Caco-2 (cell line): ENCODE measurements at regions of chr11 and their contacts with region 1.

Region 1: DNA sequence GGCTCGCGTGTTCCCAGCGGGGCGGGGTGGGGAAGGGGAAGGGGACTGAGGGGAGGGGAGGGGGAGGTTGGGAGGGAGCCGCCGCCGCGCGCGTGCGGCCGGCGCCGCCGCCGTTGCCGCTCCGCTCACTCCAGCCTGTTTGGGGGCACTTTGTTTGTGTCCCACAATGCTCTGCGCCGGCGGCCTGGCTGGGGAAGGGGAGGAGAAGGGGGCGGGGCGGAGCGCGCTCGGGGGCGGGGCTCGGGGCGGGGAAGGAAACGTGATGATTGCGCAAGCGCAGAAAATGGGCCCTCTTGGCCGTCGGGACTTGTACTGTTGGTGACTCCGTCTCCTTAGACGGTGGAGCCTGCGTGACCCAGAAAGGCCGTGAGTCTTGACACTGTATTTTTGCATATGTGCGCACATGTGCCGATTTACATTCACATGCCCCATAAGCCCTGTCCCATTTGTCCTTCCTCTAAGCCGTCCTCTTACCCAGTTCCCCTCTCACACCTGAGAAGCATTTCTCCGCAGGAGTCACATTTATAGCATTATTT is at the start of gene ZBTB44:
- DNase-seq: peak; percentile 95 to 97
- H3K4me3 ChIP-seq: peak within 1 kb of the TSS; percentile 62
- H3K4me3 Mint-ChIP-seq: peak within 1 kb of the TSS; percentile 89
- H3K27ac Mint-ChIP-seq: peak within 1 kb of the TSS; percentile 87
- H3K4me1 ChIP-seq: peaks cover 30% of the 10 kb centered on the region
- H3K4me1 Mint-ChIP-seq: peaks cover 50% of the 10 kb centered on the region
- H3K27me3 ChIP-seq: no peaks in the 10 kb centered on the region
- H3K27me3 Mint-ChIP-seq: no peaks in the 10 kb centered on the region
- CTCF ChIP-seq: no peak
- total RNA-seq, gene ZBTB44: 49.5 and 53.6 TPM in 2 replicates

Region 2: DNA sequence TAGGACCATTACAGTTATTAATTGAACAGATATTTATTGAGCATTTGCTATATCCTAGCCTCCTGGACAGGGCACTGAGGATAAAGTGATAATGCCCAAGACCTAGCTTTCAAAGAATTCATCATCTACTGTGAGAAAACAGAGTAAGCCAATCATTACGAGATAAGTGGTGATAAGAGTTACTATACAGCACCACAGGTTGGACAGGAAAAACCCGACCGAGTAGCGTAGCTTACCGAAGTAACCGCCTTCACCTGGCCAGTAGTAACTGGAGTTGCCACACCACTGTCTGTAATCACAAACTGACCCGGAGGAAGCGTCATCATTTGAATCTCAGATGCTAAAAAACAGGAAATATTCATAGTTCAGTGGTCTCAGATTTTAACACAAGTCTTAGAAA is 409.4 kb before region 1 on chr11:
- CTCF ChIA-PET with region 1: no interaction called
- POLR2A ChIA-PET with region 1: no interaction called
- intact Hi-C with region 1: loop called (anchors 10 kb)
- DNase-seq: peak; percentile 84 to 87
- H3K4me3 ChIP-seq: no peak overlapping the region
- H3K4me3 Mint-ChIP-seq: no peak overlapping the region
- H3K27ac Mint-ChIP-seq: no peak overlapping the region
- H3K4me1 ChIP-seq: peaks cover 17% of the 10 kb centered on the region
- H3K4me1 Mint-ChIP-seq: peaks cover 7% of the 10 kb centered on the region
- H3K27me3 ChIP-seq: no peaks in the 10 kb centered on the region
- H3K27me3 Mint-ChIP-seq: no peaks in the 10 kb centered on the region
- CTCF ChIP-seq: no peak

Region 3: DNA sequence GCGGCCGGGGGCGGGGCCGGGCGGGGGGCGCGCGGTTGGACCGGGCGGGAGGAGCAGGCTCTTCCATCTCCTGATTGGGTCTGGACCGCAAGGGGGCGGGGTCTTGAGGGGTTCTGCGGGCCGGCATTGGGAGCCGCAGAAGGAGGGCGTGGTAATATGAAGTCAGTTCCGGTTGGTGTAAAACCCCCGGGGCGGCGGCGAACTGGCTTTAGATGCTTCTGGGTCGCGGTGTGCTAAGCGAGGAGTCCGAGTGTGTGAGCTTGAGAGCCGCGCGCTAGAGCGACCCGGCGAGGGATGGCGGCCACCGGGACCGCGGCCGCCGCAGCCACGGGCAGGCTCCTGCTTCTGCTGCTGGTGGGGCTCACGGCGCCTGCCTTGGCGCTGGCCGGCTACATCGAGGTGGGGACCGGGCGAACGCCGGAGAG is 245.1 kb before region 1 on chr11 and contains the start of gene APLP2:
- CTCF ChIA-PET with region 1: no interaction called
- POLR2A ChIA-PET with region 1: no interaction called
- intact Hi-C with region 1: no loop called
- DNase-seq: peak; percentile 100
- H3K4me3 ChIP-seq: peak within 1 kb of the TSS; percentile 99
- H3K4me3 Mint-ChIP-seq: peak within 1 kb of the TSS; percentile 90
- H3K27ac Mint-ChIP-seq: peak within 1 kb of the TSS; percentile 91
- H3K4me1 ChIP-seq: peaks cover 41% of the 10 kb centered on the region
- H3K4me1 Mint-ChIP-seq: peaks cover 27% of the 10 kb centered on the region
- H3K27me3 ChIP-seq: no peaks in the 10 kb centered on the region
- H3K27me3 Mint-ChIP-seq: no peaks in the 10 kb centered on the region
- CTCF ChIP-seq: no peak
- total RNA-seq, gene APLP2: 1,761 and 2,076 TPM in 2 replicates

Region 4: DNA sequence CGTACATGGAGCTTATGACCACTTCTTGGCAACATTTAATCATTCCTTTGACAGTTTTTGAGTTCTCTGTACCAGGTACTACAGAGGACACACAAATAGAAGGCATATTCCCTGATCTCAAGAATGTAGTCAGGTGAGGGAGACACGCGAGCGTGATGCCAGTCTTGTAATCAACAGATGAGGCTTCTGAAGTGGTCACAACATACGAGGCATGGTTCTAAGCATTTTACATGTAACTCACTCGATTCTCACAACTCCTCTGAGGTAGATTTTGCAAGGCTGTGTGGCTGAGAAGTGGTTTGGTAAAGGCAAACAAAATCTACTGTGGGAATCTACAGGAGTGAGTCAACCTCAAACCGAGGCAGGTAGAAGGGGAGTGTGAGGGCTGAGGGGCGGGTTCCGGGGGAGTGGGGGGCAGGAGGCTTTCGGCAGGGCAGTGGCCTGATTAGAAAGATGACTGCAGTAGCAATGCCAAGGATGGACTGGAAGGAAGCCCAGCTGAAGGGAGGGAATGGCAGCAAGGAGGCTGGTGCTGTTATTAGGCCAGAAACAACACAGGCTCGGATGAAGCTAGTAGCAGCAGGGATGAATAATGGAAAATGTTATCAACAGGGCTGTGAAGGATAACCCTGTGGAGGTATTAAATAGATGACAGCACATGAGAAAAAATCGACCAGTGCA is 91.4 kb before region 1 on chr11:
- CTCF ChIA-PET with region 1: no interaction called
- POLR2A ChIA-PET with region 1: interaction called, 11 read pairs
- intact Hi-C with region 1: no loop called
- DNase-seq: no peak
- H3K4me3 ChIP-seq: no peak overlapping the region
- H3K4me3 Mint-ChIP-seq: no peak overlapping the region
- H3K27ac Mint-ChIP-seq: no peak overlapping the region
- H3K4me1 ChIP-seq: peaks cover 5% of the 10 kb centered on the region; the same call in 1 of the 2 replicates
- H3K4me1 Mint-ChIP-seq: no peaks in the 10 kb centered on the region
- H3K27me3 ChIP-seq: no peaks in the 10 kb centered on the region
- H3K27me3 Mint-ChIP-seq: no peaks in the 10 kb centered on the region
- CTCF ChIP-seq: no peak

Region 5: GRCh38 chr11:130261571-130261970 is 53.2 kb before region 1 on chr11:
- CTCF ChIA-PET with region 1: no interaction called
- POLR2A ChIA-PET with region 1: no interaction called
- intact Hi-C with region 1: no loop called
- DNase-seq: no peak
- H3K4me3 ChIP-seq: no peak overlapping the region
- H3K4me3 Mint-ChIP-seq: no peak overlapping the region
- H3K27ac Mint-ChIP-seq: no peak overlapping the region
- H3K4me1 ChIP-seq: no peaks in the 10 kb centered on the region
- H3K4me1 Mint-ChIP-seq: no peaks in the 10 kb centered on the region
- H3K27me3 ChIP-seq: no peaks in the 10 kb centered on the region
- H3K27me3 Mint-ChIP-seq: no peaks in the 10 kb centered on the region
- CTCF ChIP-seq: no peak

Region 6: DNA sequence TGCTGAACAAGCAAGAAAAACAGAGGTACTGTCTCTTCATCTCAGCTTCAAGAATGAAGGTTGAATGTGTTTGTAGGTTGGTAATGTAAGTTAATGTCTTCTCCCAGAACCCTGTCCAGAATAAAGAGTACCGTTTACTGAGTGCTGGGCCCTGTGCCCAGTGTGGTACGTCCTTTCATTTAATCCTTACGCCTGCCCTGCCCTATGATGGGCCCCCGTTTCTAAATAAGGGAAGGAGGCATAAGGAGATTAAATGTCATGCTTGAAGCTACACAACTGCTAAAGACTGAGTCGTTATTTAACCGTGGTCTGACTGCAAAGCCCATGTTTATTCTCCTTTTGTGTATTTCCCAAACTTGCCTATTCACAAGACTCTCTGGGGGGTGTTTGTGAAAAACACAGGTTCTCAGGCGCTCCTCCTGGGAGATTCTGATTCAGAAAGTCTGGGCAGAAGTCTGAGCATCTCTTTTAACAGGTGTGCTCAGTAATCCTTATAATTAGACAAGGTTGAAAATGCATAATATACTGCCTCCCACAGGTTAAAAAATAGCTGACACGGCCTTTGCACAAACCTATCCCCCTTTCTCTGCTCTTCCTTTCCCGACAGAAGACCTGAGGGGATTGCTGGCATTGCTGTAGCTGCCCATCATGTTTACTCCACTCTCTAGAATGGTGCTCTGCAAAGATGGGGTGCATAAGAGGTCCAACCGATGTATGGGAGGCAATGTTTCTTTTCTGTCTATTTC is 56.2 kb after region 1 on chr11:
- CTCF ChIA-PET with region 1: interaction called, 7 read pairs
- POLR2A ChIA-PET with region 1: no interaction called
- intact Hi-C with region 1: loop called (anchors 5 kb)
- DNase-seq: peak; percentile 17 to 34
- H3K4me3 ChIP-seq: no peak overlapping the region
- H3K4me3 Mint-ChIP-seq: no peak overlapping the region
- H3K27ac Mint-ChIP-seq: no peak overlapping the region
- H3K4me1 ChIP-seq: no peaks in the 10 kb centered on the region
- H3K4me1 Mint-ChIP-seq: peaks cover 8% of the 10 kb centered on the region
- H3K27me3 ChIP-seq: no peaks in the 10 kb centered on the region
- H3K27me3 Mint-ChIP-seq: no peaks in the 10 kb centered on the region
- CTCF ChIP-seq: peak; percentile 26 to 40